AG04449 (cell line): ENCODE measurements at regions of chr3 and their contacts with region 1.

Region 1: DNA sequence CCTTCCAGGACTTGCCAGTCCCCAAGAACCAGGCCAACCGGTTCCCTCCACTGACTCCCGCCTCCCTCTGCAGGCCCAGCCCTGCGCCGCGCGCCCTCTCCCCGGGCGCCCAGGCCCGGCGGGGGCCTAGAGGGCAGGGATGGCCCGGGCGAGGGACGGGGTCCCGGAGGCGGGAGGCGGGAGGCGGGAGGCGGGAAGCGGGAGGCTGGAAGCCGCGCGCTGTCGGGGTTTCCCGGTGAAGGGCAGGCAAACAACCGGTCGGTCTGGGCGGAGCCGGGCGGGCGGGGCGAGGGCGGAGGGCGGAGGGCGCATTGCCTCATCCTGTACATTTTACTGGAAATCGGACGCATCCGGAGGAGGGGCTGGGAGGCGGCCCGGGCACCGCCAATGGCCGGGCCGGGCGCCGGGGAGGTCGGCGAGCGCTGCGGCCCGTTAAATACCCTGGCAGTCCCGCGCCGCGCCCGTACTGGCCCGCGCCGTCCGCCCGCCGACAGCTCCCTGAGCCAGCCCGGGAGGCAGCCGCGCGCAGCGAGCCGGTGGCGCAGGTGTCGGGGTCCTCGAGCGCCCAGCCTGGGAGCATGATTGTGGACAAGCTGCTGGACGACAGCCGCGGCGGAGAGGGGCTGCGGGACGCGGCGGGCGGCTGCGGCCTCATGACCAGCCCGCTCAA is at the start of gene NFKBIZ:
- DNase-seq: no peak
- H3K4me3 ChIP-seq: peak within 1 kb of the TSS; percentile 79
- CTCF ChIP-seq: no peak

Region 2: GRCh38 chr3:101809178-101810021 is 39.8 kb before region 1 on chr3:
- CTCF ChIA-PET with region 1: interaction called, 9 read pairs
- POLR2A ChIA-PET with region 1: interaction called, 11 read pairs
- DNase-seq: no peak
- H3K4me3 ChIP-seq: no peak overlapping the region
- CTCF ChIP-seq: peak; percentile 48

Region 3: DNA sequence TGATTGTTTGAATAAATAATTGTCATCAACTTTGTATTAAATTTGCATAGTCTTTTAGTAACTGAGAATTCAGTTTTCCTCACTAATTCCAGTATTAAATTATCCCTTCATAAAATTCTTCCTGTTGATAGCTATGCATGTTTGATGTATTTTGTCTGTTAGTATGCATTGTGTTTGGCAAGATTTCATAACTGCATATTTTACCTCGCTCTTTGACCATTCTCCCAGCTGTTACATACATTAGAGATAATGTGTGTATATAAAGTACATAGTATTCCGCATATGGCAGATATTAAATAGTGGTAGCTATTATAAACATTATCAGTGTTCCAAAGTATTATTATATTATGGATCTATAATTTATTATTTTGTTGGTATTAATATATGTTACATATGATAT is 10.5 kb before region 1 on chr3:
- CTCF ChIA-PET with region 1: no interaction called
- POLR2A ChIA-PET with region 1: interaction called, 15 read pairs
- DNase-seq: no peak
- H3K4me3 ChIP-seq: no peak overlapping the region
- CTCF ChIP-seq: no peak

Region 4: GRCh38 chr3:101868534-101869464 is 19.6 kb after region 1 on chr3:
- CTCF ChIA-PET with region 1: no interaction called
- POLR2A ChIA-PET with region 1: interaction called, 25 read pairs
- DNase-seq: no peak
- H3K4me3 ChIP-seq: no peak overlapping the region
- CTCF ChIP-seq: no peak

Region 5: DNA sequence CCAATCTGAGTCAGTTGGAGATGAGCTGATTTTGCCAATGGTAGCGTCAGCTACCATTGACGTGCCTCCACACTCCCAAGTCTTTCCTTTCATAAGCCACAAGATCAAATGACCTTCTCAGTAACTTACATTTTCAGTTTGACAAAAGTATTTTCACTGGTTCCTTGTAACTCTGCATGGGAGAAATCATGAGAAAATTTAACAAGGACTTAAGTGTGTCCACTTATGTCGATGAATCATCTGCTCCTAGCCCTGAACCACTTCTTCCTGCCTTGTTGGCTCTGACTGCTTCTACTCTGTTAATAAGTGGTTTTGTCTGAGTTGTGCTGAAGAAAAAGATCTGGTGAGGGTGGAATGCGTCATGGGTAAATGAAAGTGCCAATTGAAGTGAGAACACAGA is 101.3 kb after region 1 on chr3:
- CTCF ChIA-PET with region 1: no interaction called
- POLR2A ChIA-PET with region 1: interaction called, 13 read pairs
- DNase-seq: peak; percentile 86
- H3K4me3 ChIP-seq: no peak overlapping the region
- CTCF ChIP-seq: no peak

Region 6: GRCh38 chr3:102180291-102181039 is 331.3 kb after region 1 on chr3:
- CTCF ChIA-PET with region 1: no interaction called
- POLR2A ChIA-PET with region 1: interaction called, 29 read pairs
- DNase-seq: peak; percentile 95
- H3K4me3 ChIP-seq: no peak overlapping the region
- CTCF ChIP-seq: no peak

Region 7: DNA sequence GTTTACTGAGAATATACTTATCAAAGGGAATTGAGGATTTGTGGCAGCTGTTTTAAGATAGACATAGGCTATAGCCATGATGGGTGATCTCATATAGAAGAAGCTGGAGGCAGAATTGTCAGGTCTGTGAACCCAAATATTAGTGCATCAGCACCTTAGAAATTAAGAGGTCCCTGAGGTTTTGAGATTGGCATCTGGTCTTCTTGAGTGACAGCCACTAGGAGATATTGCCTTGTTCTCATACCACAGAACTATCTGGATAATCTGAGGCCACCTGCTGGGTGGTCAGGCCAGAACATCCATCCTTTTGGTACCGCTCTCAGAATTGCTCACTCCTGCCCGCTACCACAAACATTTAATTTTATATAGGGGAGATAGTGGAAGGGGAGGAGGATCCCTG is 374.9 kb after region 1 on chr3:
- CTCF ChIA-PET with region 1: interaction called, 42 read pairs
- POLR2A ChIA-PET with region 1: interaction called, 40 read pairs
- DNase-seq: no peak
- H3K4me3 ChIP-seq: no peak overlapping the region
- CTCF ChIP-seq: peak; percentile 28